ENCODE measurements at regions of chr17 and their contacts with region 1.

Region 1: GRCh38 chr17:68457539-68458259 is 403 bp upstream of the WIPI1 start:
- DNase-seq: peak; percentile 96
- H3K4me3 Mint-ChIP-seq: peak overlapping the region; percentile 75
- H3K27ac Mint-ChIP-seq: peak overlapping the region; percentile 68
- H3K4me1 Mint-ChIP-seq: peaks cover 53% of the 10 kb centered on the region
- H3K27me3 Mint-ChIP-seq: peaks cover 2% of the 10 kb centered on the region

Region 2: DNA sequence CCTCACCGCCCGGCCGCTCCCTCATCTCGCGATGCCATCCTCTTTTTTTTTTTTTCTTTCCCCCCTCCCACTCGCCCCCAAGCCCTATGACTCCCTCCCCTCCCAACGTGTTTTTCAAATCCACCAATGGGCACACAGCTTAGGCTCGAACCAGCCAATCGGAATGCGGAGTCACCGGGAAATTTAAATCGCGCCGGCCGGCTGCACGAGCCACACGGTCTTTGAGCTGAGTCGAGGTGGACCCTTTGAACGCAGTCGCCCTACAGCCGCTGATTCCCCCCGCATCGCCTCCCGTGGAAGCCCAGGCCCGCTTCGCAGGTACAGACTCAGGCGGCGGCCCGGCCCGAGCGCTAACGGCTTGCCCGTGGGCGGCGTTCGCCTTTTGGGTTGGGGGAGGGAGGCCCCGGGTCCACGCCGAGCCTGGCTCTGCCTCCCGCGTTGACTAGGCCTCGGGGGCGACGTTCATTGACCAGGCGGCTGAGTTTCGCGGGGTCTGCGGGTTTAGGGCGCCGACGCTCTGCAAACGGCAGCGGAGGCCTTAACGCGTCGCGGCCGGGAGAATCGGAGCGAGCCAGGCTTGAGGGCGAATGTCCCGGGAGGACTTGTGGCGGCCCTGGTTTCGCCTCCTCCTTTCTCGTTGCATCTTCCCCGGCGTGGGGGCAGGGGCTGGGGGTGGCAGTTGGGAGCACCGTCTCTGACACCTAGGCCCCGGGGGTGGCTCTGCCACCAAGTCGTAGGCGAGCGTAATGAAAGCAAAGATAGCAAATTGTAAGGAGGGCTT is 422.0 kb before region 1 on chr17 and contains the start of gene KPNA2:
- CTCF ChIA-PET with region 1: no interaction called
- intact Hi-C with region 1: loop called (anchors 1 kb)
- DNase-seq: peak; percentile 94
- H3K4me3 Mint-ChIP-seq: peak within 1 kb of the TSS; percentile 94
- H3K27ac Mint-ChIP-seq: peak within 1 kb of the TSS; percentile 96
- H3K4me1 Mint-ChIP-seq: peaks cover 19% of the 10 kb centered on the region
- H3K27me3 Mint-ChIP-seq: no peaks in the 10 kb centered on the region
- total RNA-seq, gene KPNA2: 186 to 203 TPM

Region 3: GRCh38 chr17:68184816-68185436 is 272.8 kb before region 1 on chr17:
- CTCF ChIA-PET with region 1: interaction called, 3 read pairs
- intact Hi-C with region 1: loop called (anchors 1 kb)
- DNase-seq: peak; percentile 78
- H3K4me3 Mint-ChIP-seq: peak overlapping the region; percentile 40
- H3K27ac Mint-ChIP-seq: peak overlapping the region; percentile 68
- H3K4me1 Mint-ChIP-seq: peaks cover 48% of the 10 kb centered on the region
- H3K27me3 Mint-ChIP-seq: no peaks in the 10 kb centered on the region

Region 4: GRCh38 chr17:68291844-68292695 is 165.6 kb before region 1 on chr17:
- CTCF ChIA-PET with region 1: no interaction called
- intact Hi-C with region 1: loop called (anchors 1 kb)
- DNase-seq: peak; percentile 85
- H3K4me3 Mint-ChIP-seq: peak overlapping the region; percentile 81
- H3K27ac Mint-ChIP-seq: peak overlapping the region; percentile 84
- H3K4me1 Mint-ChIP-seq: peaks cover 57% of the 10 kb centered on the region
- H3K27me3 Mint-ChIP-seq: no peaks in the 10 kb centered on the region

Region 5: DNA sequence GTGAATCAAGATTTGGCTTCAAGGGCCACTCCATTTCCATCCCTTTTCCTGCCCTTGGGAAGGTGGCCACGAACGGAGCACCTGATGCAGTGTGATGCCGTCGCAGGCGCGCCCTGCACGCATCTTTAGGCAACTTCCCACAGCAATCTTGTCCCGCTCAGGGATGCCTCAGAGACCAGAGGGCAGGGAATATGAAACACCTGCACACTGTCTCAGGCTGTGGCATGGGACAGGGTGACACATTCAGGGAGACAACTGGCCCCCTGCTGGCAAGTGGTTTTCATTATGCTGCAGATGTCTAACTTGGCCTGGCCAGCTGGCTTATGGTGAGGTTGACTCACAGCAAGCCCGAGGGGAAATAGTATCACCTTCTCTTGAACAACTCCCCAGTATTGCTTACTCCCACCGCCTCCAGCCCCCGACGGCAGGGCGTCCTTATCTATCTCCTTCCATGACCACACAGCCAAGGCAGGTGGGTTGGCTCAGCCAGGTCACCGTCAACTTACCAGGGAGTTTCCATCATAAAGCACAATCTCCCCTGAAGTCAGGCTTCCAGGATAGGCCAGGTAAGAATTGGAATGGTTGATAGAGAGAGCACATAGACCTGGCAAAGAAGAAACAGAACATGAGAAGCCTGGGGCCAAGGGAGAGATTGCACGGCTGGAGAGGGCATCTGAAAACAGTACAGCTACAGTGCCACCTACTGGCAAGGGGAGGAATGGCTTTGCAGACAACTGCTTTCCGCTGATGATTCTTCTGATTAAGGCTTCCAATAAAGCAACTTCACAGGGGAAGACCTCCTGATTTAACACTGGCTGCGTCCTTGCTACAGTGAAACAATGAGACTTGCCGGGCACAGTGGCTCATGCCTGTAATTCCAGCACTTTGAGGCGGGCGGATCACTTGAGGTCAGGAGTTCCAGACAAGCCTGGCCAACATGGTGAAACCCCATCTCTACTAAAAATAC is 21.5 kb before region 1 on chr17:
- CTCF ChIA-PET with region 1: interaction called, 43 read pairs
- intact Hi-C with region 1: no loop called
- DNase-seq: peak; percentile 94
- H3K4me3 Mint-ChIP-seq: no peak overlapping the region
- H3K27ac Mint-ChIP-seq: no peak overlapping the region
- H3K4me1 Mint-ChIP-seq: peaks cover 35% of the 10 kb centered on the region
- H3K27me3 Mint-ChIP-seq: no peaks in the 10 kb centered on the region